ENCODE measurements at regions of chr1 and their contacts with region 1.

Region 1: DNA sequence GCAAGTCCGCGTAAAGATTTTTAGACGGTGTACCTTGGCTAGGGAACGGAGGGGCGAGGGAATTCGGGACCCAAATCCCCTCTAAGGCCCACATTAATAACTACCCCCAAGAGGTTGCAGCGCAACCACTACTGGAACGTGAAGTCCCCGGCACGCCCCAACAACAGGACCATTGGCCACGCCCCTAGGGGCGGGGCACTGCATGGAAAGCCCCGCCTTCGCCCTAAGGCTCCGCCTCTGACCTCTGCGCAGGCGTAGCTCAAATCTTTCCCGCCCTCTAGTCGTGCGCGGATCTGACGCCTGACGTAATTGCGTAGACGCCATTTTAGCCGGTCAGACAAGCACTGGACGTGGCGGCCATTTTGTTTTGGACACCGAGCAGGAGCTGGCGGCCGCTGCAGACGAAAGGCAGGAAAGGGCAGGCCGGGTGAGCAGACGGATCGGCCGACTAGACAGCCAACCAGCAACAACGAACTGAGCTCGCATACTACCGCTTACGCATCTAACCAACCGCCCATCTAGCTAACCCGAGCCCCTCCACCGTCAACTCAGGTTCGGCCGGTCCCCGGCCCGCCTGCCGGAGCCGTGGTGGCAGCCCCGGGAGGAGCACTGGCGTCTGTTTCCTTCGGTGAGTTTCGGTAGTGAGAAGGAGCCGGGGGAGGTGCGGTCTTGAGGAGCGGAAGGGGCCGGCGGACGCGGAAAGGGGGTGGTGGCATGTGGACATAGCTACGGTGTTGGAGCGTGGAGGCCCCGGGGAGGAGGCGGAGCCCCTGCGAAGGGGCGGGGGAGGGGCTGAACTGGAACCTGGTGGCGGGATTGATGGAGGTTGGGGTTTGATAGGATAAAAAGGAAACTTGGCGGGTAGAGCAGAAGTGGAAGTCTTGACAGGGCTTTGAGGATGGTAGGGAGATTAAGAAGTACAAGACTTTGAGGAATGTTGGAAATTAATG is at the start of gene CHTOP:
- DNase-seq: peak; percentile 97
- H3K4me3 ChIP-seq: peak within 1 kb of the TSS; percentile 95
- H3K27ac ChIP-seq: peak within 1 kb of the TSS; percentile 100
- H3K27me3 ChIP-seq: no peaks in the 10 kb centered on the region
- CTCF ChIP-seq: no peak
- polyA plus RNA-seq, gene CHTOP: 49.2 and 59.5 TPM in 2 replicates

Region 2: GRCh38 chr1:153608742-153609584 is 25.0 kb before region 1 on chr1:
- CTCF ChIA-PET with region 1: interaction called, 80 read pairs
- POLR2A ChIA-PET with region 1: interaction called, 46 read pairs
- DNase-seq: no peak
- H3K4me3 ChIP-seq: peak overlapping the region; percentile 57
- H3K27ac ChIP-seq: peak overlapping the region; percentile 90
- H3K27me3 ChIP-seq: no peaks in the 10 kb centered on the region
- CTCF ChIP-seq: no peak

Region 3: GRCh38 chr1:153617675-153618074 is 16.3 kb before region 1 on chr1:
- CTCF ChIA-PET with region 1: interaction called, 80 read pairs
- POLR2A ChIA-PET with region 1: interaction called, 46 read pairs
- DNase-seq: no peak
- H3K4me3 ChIP-seq: no peak overlapping the region
- H3K27ac ChIP-seq: no peak overlapping the region
- H3K27me3 ChIP-seq: no peaks in the 10 kb centered on the region
- CTCF ChIP-seq: peak; percentile 61

Region 4: DNA sequence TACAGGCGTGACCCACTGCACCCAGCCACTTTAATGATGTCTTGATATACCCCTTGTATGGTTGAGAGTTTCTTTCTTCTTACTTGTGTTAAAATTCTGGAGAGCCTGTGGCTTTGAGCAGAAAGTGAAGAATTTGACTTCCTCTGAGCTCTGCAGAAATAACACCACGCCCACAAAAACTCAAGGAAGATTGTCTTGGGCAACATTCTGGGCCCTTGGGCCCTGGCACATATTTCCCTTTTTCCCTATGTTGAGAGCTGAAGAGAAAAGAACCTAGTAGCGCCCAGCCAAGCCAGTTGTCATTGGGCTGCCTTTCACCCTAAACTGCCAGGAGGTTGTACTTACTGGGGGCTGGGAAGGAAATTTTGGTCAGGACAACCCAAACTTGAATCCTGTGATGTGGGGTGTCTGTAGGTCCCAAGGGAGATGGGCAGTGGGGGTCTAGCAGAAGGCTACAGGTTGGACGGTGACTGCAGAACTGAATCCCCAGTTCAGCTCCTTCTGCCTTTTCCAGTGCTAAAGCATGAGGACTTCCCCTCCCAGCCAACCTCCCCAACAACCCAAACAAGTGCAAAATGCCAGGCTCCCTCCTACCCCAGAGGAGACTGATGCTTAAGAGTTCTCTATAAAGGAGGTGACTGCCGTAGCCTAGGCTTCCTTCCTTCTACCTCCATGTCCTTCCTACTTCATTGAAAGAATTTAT is 12.8 kb after region 1 on chr1:
- CTCF ChIA-PET with region 1: no interaction called
- POLR2A ChIA-PET with region 1: interaction called, 14 read pairs
- DNase-seq: no peak
- H3K4me3 ChIP-seq: no peak overlapping the region
- H3K27ac ChIP-seq: no peak overlapping the region
- H3K27me3 ChIP-seq: no peaks in the 10 kb centered on the region
- CTCF ChIP-seq: no peak

Region 5: GRCh38 chr1:153658400-153659174 is 24.6 kb after region 1 on chr1 and contains the start of gene SNAPIN:
- CTCF ChIA-PET with region 1: no interaction called
- POLR2A ChIA-PET with region 1: interaction called, 10 read pairs
- DNase-seq: peak; percentile 49
- H3K4me3 ChIP-seq: peak within 1 kb of the TSS; percentile 92
- H3K27ac ChIP-seq: no peak within 1 kb of the TSS
- H3K27me3 ChIP-seq: no peaks in the 10 kb centered on the region
- CTCF ChIP-seq: no peak; the same call in 1 of the 2 replicates
- polyA plus RNA-seq, gene SNAPIN: 54.1 and 56.8 TPM in 2 replicates